Heart right ventricle (tissue), 16 donors: ENCODE measurements at regions of chr6 and their contacts with region 1.

Region 1: GRCh38 chr6:63923139-63923739 is 287.6 kb downstream of the PHF3 start:
- DNase-seq: no peak
- ATAC-seq: no peak
- H3K4me3 ChIP-seq: no peak overlapping the region
- H3K27ac ChIP-seq: no peak overlapping the region
- H3K4me1 ChIP-seq: peaks cover 0 to 5% (median 0%) of the 10 kb centered on the region in 9 donors
- H3K27me3 ChIP-seq: peaks cover 0 to 6% (median 0%) of the 10 kb centered on the region in 7 donors
- CTCF ChIP-seq: peak; percentile 40 to 75 (median 63)

Region 2: DNA sequence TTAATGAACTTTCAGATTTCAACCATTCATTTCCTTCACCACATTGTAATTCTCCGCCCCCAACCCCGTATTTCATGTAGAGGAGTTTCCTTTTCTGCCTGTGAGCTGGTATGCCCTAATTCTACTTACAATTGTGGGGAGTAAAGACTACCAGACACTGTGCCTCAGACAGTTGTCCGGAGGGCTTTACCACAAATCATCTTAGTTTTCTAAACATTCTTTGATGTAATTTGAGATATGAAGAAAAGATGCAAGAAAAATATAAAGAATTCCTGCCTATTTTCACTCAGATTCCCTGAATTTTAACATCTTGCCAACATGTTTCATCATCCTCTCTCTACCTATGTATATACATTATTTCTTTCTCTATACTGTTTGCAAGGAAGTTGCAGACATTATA is 379.3 kb before region 1 on chr6:
- intact Hi-C with region 1: no loop called
- DNase-seq: no peak
- ATAC-seq: no peak
- H3K4me3 ChIP-seq: no peak overlapping the region
- H3K27ac ChIP-seq: no peak overlapping the region
- H3K4me1 ChIP-seq: no peaks in the 10 kb centered on the region
- H3K27me3 ChIP-seq: peaks cover 0 to 3% (median 0%) of the 10 kb centered on the region in 7 donors
- CTCF ChIP-seq: no peak

Region 3: DNA sequence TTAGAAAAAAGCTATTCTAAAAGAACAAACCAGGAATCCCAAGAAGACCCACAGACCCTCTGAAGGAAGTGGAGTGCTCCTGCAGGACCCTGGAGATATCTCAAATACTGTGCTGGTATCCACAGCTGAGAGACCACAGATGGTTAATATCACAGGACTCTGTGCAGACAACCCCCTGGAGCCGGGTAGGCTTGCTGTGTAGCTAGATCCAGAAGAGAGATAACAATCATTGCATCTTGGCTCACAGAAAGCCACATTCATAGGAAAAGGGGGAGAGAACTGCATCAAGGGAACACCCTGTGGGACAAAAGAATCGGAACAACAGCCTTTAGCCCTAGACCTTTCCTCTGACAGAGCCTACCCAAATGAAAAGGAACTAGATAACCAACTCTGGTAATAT is 401.9 kb after region 1 on chr6:
- intact Hi-C with region 1: loop called in 8 of 10 experiments (anchors 5 to 10 kb)
- DNase-seq: no peak
- ATAC-seq: no peak
- H3K4me3 ChIP-seq: no peak overlapping the region
- H3K27ac ChIP-seq: no peak overlapping the region
- H3K4me1 ChIP-seq: no peaks in the 10 kb centered on the region
- H3K27me3 ChIP-seq: no peaks in the 10 kb centered on the region
- CTCF ChIP-seq: no peak

Region 4: DNA sequence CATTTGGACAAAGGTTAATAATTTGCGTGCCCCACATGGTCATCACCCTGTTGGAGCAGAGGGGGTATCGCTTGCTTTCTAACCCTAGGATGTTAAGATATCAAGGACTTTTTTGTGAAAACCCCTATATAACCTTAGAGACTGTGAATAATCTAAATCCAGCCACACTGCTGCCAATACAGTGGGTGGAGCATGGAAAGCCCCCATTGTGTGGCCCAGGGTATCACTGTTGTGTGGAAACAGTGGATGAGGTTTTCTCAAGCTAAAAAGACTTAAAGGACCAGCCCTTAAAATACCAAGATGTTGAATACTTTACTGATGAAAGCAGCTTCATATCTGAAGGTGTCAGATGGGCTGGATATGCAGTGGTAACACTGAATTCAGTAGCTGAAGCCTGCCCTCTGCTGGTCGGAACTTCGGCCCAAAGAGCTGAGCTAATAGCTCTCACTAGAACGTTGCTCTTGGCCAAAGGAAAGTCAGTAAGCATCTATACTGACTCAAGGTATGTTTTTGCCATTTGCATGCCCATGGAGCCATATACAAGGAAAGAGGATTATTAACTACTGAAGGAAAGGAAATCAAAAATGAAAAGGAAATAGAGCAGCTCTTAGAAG is 407.6 kb after region 1 on chr6:
- intact Hi-C with region 1: loop called in 8 of 10 experiments (anchors 5 to 10 kb)
- DNase-seq: peak; percentile 51 to 60
- ATAC-seq: no peak
- H3K4me3 ChIP-seq: no peak overlapping the region
- H3K27ac ChIP-seq: no peak overlapping the region
- H3K4me1 ChIP-seq: no peaks in the 10 kb centered on the region
- H3K27me3 ChIP-seq: no peaks in the 10 kb centered on the region
- CTCF ChIP-seq: peak in 7 of 9 donors; percentile 35 to 70 (median 57)